AG04450 (cell line): ENCODE measurements at regions of chr1 and their contacts with region 1.

Region 1: DNA sequence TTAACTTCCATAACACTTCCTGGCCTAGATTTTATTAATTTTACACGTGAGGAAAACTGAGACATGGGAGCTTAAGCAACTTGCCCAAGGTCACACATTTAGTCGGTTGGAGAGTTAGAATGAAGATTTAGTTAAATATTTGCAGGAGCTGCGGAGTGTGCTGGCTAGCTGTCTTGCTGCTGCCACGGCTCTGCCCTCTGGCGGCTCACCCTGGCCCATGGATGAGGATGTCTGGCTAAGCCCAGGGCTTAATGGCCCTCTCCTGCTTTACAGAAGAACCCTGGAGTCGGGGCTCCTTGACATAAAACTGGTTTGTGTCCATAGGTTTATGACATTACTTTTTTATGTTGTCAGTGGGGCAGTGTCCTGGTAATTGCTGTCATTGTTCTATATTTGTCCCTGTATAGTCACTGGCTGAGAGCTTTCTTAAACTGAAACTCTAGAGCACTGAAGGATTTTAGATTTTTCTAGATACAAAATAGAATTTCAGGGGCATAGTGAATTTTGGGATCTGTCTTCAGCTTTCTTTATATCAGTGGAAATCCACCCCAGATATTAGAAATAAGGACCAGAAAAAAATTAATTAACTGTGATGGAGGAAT is 88.9 kb upstream of the WLS start:
- DNase-seq: no peak
- H3K4me3 ChIP-seq: no peak overlapping the region
- H3K27ac ChIP-seq: no peak overlapping the region
- H3K27me3 ChIP-seq: no peaks in the 10 kb centered on the region
- CTCF ChIP-seq: peak; percentile 88

Region 2: GRCh38 chr1:68111519-68112436 is 209.4 kb before region 1 on chr1:
- CTCF ChIA-PET with region 1: interaction called, 50 read pairs
- POLR2A ChIA-PET with region 1: no interaction called
- DNase-seq: peak; percentile 77
- H3K4me3 ChIP-seq: no peak overlapping the region
- H3K27ac ChIP-seq: peak overlapping the region; percentile 22
- H3K27me3 ChIP-seq: no peaks in the 10 kb centered on the region
- CTCF ChIP-seq: peak; percentile 79

Region 3: DNA sequence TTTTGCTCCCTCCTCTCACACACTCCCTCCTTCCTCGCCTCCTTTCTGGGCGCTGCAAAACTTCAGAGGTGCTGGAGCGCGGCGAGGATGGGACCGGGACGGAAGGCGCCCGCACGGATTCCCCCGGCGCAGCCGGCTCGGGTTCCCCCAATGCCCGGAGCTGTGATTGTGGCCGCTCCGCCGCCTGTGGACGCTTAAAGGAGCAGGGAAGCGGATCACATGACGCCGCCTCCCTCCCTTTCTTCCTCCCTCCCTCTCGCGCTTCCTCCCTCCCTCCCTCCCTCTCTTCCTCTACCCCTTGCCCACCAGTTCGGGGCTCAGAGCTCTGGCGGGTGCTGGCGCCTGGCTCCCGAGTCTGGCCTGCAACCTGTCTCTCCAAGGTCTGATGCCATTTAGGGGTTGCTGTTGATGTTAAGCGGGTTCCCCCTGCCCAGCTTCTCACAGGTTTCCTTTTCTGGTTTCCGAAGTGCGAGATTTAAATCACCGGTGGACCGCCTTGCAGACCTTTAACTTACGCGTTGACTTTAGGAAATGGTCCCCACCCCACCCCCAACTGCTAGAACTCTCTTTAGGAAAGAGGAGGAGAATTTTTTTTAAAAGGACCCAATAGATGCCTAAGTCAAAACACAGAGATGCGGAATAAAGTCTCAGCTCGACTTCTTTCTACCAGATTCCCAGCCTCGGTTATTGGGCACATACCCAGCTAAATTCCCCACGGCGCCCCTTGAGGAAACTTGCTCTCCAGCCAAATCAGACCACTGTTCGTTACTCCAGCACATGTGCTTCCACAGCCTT is 88.6 kb before region 1 on chr1 and contains the start of gene WLS:
- CTCF ChIA-PET with region 1: interaction called, 6 read pairs
- POLR2A ChIA-PET with region 1: interaction called, 12 read pairs
- DNase-seq: peak; percentile 60
- H3K4me3 ChIP-seq: peak within 1 kb of the TSS; percentile 76
- H3K27ac ChIP-seq: peak within 1 kb of the TSS; percentile 73
- H3K27me3 ChIP-seq: no peaks in the 10 kb centered on the region
- CTCF ChIP-seq: peak; percentile 27; the same call in 1 of the 2 replicates
- polyA plus RNA-seq, gene WLS: 391 and 417 TPM in 2 replicates

Region 4: DNA sequence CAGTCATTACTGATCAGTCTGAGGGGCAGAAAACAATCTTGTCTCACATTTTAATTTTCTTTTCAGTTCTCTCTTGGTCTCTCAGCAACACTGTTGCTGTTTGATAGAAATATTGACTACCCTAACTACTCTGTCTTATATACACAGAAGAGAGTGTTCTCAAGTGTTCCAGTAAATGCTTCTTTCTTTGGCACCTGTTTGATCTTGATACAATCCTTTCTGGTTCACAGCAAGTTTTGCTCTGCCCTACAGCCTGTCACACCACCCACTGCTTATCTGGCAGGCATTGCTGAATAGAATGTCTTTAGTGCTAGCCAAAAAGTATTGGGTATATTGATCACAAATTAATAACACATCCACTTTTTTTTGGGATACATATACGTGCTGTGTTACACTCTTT is 13.2 kb before region 1 on chr1:
- CTCF ChIA-PET with region 1: interaction called, 10 read pairs
- POLR2A ChIA-PET with region 1: no interaction called
- DNase-seq: no peak
- H3K4me3 ChIP-seq: no peak overlapping the region
- H3K27ac ChIP-seq: no peak overlapping the region
- H3K27me3 ChIP-seq: peaks cover 2% of the 10 kb centered on the region
- CTCF ChIP-seq: no peak

Region 5: DNA sequence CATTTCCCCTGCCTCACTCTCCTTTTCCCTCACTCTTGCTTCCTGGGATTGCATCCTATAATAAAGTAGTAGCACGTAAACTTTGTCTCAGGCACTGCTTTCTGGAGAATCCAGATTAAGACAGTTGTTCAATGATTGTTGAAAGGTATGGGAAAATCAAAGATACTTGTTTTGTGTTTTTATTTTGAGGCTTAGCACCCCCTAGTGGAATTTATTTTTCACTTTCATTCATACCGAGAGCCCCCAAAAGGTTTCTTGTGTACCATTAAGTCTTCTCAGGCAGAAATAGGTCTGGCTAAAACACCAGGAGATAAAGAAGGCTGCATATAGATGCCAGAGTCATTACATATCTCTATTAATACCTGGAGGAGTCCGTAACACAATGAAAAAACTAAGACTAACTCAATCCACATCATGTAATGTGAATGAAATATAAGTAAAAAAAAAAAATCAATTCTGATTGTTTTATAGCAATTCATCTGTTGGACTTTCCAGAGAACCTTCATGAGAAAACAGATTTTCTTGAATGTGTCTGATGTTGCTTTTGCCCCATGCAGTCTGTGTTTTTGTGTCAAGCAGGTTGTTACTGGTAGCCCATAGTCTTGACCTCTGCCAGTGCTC is 25.1 kb after region 1 on chr1:
- CTCF ChIA-PET with region 1: interaction called, 10 read pairs
- POLR2A ChIA-PET with region 1: no interaction called
- DNase-seq: no peak
- H3K4me3 ChIP-seq: no peak overlapping the region
- H3K27ac ChIP-seq: no peak overlapping the region
- H3K27me3 ChIP-seq: no peaks in the 10 kb centered on the region
- CTCF ChIP-seq: peak; percentile 57